CD14-positive monocyte (primary cell): ENCODE measurements at regions of chr15 and their contacts with region 1.

Region 1: DNA sequence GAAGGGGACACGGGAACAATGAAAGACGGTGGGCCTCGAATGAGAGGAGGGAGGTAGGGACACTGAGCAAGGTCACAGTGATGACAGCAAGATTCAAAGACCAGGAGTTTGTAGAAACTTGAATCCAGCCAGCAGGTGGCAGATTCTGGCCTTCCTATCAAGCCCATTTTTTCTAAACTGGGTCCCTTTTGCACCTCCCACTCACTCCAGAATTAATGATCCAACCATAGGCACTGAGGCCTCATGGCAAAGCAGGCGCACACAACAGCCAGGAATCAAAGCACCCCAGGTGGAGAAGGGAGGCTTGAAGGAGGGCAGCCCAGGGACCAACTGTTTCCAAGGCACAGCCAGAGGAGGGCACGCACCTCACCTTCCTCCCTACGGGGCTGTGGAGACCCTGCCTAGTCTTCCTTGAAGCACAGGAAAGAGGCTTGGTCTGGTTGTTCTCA is 90.2 kb downstream of the ANP32A start:
- DNase-seq: peak; percentile 38 to 55 (median 45)
- H3K4me3 ChIP-seq: no peak overlapping the region
- H3K4me3 Mint-ChIP-seq: no peak overlapping the region
- H3K27ac ChIP-seq: no peak overlapping the region
- H3K27ac Mint-ChIP-seq: no peak overlapping the region
- H3K4me1 ChIP-seq: peaks cover 8 to 12% of the 10 kb centered on the region in 2 donors
- H3K4me1 Mint-ChIP-seq: peaks cover 17% of the 10 kb centered on the region
- H3K27me3 ChIP-seq: no peaks in the 10 kb centered on the region
- H3K27me3 Mint-ChIP-seq: peaks cover 0 to 3% (median 1%) of the 10 kb centered on the region in 3 donors
- CTCF ChIP-seq: peak; percentile 70

Region 2: GRCh38 chr15:68599560-68600071 is 130.9 kb before region 1 on chr15:
- intact Hi-C with region 1: no loop called
- DNase-seq: no peak
- H3K4me3 ChIP-seq: no peak overlapping the region
- H3K4me3 Mint-ChIP-seq: no peak overlapping the region
- H3K27ac ChIP-seq: no peak overlapping the region
- H3K27ac Mint-ChIP-seq: no peak overlapping the region
- H3K4me1 ChIP-seq: peaks cover 0 to 3% of the 10 kb centered on the region in 2 donors
- H3K4me1 Mint-ChIP-seq: peaks cover 7% of the 10 kb centered on the region
- H3K27me3 ChIP-seq: no peaks in the 10 kb centered on the region
- H3K27me3 Mint-ChIP-seq: peaks cover 1 to 7% (median 5%) of the 10 kb centered on the region in 3 donors
- CTCF ChIP-seq: no peak

Region 3: DNA sequence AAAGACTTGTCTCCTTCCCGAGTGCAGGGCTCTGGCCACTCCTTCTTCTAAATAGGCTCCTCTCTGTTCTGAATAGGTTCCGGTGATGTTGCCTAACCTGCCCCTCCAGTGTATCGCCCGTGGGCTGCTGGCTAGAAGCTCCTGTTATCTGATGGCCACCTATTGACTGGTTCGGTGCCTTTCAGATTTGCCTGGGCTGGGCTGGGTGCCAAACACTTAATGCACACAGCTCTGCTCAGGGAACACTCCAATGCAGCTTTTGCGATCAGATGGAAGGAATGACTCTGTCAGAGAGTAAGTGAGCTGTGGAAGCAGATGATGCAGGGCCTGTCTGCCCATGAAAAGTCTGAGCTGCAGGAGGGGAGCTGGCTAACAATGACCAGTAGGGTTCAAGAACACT is 38.8 kb before region 1 on chr15:
- intact Hi-C with region 1: no loop called
- DNase-seq: no peak
- H3K4me3 ChIP-seq: no peak overlapping the region
- H3K4me3 Mint-ChIP-seq: no peak overlapping the region
- H3K27ac ChIP-seq: no peak overlapping the region
- H3K27ac Mint-ChIP-seq: no peak overlapping the region
- H3K4me1 ChIP-seq: peaks cover 0 to 7% of the 10 kb centered on the region in 2 donors
- H3K4me1 Mint-ChIP-seq: peaks cover 8% of the 10 kb centered on the region
- H3K27me3 ChIP-seq: no peaks in the 10 kb centered on the region
- H3K27me3 Mint-ChIP-seq: peaks cover 0 to 1% (median 0%) of the 10 kb centered on the region in 3 donors
- CTCF ChIP-seq: no peak

Region 4: GRCh38 chr15:68829068-68829467 is 98.6 kb after region 1 on chr15:
- intact Hi-C with region 1: loop called (anchors 5 to 10 kb)
- DNase-seq: peak in 2 of 3 donors; percentile 68 to 73
- H3K4me3 ChIP-seq: no peak overlapping the region
- H3K4me3 Mint-ChIP-seq: no peak overlapping the region
- H3K27ac ChIP-seq: no peak overlapping the region
- H3K27ac Mint-ChIP-seq: peak overlapping the region in 1 of 7 donors; percentile 4
- H3K4me1 ChIP-seq: peaks cover 4 to 11% of the 10 kb centered on the region in 2 donors
- H3K4me1 Mint-ChIP-seq: peaks cover 13% of the 10 kb centered on the region
- H3K27me3 ChIP-seq: no peaks in the 10 kb centered on the region
- H3K27me3 Mint-ChIP-seq: peaks cover 3 to 10% (median 7%) of the 10 kb centered on the region in 3 donors
- CTCF ChIP-seq: peak; percentile 72